ENCODE measurements at regions of chr15 and their contacts with region 1.

Region 1: DNA sequence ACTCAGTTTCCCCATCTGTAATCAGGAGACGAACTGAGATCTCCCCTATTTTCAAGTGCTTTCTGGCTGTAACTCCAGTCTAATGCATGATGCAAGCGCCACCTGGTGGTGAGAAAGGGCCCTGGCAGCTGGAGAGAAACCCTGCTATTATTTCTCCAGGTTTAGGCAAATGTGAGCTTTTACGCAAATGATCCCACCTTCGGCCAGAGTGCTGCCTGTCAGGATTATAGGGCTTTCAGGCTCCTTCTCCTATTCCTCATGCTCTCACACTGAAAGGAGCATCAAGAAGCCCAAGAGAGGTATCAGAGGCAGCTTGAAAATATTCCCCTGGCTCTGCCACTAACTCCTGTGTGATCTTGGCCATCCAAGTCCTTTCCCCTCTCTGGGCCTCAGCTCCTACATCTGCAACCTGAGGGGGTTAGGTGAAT is 93.9 kb upstream of the RASGRF1 start:
- DNase-seq: no peak
- H3K4me3 ChIP-seq: no peak overlapping the region
- H3K27me3 ChIP-seq: 0 out of 2 replicates have a peak, but pooled peaks cover 2% of the 10 kb centered on the region
- CTCF ChIP-seq: peak; percentile 94

Region 2: DNA sequence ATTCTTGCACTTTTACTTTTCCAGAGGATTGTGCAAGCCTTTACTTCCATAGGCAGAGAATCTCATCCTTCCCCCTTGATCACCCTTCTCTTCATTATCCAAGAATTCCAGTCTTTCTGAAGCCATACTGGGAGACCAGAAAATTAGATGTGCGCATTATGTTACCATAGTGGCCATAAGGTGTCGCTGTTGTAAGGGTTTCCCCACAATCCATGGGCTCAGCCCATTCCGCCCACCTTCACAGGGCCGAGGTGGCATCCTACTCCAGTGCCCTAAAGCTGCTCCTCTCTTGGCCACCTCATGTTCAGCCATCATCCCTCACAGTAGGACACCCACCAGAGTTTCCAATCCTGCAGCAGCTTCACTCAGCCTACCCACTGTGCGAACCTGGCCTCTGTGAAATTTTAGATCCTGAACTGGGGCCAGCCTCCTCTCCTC is 274.7 kb before region 1 on chr15:
- CTCF ChIA-PET with region 1: interaction called, 28 read pairs
- POLR2A ChIA-PET with region 1: no interaction called
- DNase-seq: no peak
- H3K4me3 ChIP-seq: no peak overlapping the region
- H3K27me3 ChIP-seq: no peaks in the 10 kb centered on the region
- CTCF ChIP-seq: peak; percentile 69

Region 3: GRCh38 chr15:78979456-78980320 is 204.8 kb before region 1 on chr15:
- CTCF ChIA-PET with region 1: interaction called, 13 read pairs
- POLR2A ChIA-PET with region 1: no interaction called
- DNase-seq: no peak
- H3K4me3 ChIP-seq: no peak overlapping the region
- H3K27me3 ChIP-seq: no peaks in the 10 kb centered on the region
- CTCF ChIP-seq: peak; percentile 73

Region 4: DNA sequence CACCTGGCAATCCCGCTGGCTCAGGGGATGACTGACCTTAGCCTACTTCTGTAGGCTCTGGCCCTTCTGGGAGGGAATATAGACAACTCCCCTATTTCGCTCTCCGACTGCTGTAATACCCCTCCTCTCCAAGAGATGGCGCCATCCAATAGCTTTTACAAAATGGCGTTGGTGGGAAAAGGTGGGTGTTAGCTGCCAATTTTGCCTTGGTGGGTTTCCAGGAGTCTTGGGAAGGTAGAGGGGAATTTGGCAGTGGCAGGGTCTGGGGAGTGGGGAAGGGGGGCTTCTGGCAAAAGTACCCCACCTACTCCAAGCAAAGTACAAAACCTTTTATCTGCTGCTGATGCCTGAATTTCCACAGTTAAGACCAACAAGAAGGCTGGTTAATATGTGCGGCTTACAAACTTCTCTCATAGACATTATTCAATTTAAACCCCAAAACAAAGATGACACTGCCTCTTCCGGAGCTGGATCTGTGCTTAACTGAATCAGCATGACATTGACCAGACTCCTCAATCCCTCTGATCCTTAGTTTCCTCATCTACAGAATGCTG is 156.0 kb before region 1 on chr15:
- CTCF ChIA-PET with region 1: interaction called, 120 read pairs
- POLR2A ChIA-PET with region 1: interaction called, 3 read pairs
- DNase-seq: no peak
- H3K4me3 ChIP-seq: no peak overlapping the region
- H3K27me3 ChIP-seq: no peaks in the 10 kb centered on the region
- CTCF ChIP-seq: peak; percentile 82

Region 5: DNA sequence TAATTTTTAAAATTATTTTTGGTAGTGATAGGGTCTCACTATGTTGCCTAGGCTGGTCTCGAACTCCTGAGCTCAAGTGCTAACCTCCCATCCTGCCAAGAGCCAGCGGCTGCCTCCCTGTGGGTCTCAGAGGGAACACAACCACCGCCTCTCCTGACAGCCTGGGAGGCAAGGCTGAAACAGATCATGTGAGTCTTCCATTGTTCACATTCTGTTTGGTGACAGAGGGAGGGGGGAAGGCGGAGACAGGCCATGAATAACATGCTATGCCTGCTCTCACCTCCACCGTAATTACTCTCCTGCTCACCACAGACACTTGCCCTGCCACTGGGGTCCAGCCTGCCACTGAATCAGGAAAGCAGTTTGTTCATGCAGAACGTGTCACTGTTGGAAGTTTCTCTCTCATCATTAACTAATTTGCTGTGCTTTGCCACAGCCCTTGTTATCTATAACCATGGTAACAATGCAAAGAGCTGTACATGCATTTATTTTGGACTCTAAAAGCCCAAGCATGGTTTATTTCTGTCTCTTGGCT is 15.5 kb before region 1 on chr15:
- CTCF ChIA-PET with region 1: interaction called, 34 read pairs
- POLR2A ChIA-PET with region 1: no interaction called
- DNase-seq: no peak
- H3K4me3 ChIP-seq: no peak overlapping the region
- H3K27me3 ChIP-seq: no peaks in the 10 kb centered on the region
- CTCF ChIP-seq: no peak

Region 6: GRCh38 chr15:79204886-79205675 is 20.6 kb after region 1 on chr15:
- CTCF ChIA-PET with region 1: interaction called, 11 read pairs
- POLR2A ChIA-PET with region 1: no interaction called
- DNase-seq: no peak
- H3K4me3 ChIP-seq: no peak overlapping the region
- H3K27me3 ChIP-seq: no peaks in the 10 kb centered on the region; the same call in none of the 2 replicates
- CTCF ChIP-seq: no peak

Region 7: DNA sequence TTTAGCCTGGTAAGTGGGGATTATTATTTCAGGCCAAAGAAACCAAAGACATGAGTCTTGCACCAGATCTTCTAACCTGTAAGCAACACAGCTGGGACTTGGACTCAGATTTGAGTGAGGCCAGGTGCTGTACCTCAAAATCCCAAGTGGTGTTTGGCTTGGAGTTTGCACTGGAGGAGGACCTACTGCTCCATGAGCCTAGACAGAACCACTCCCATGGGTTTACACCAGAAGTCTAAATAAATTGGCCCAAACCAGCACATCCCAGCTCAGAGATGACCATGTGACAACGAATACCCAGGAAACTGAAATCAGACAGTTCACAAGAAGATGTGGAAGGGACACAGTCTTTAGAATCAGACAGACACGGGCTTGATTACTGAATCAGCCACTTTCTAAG is 295.1 kb after region 1 on chr15:
- CTCF ChIA-PET with region 1: no interaction called
- POLR2A ChIA-PET with region 1: no interaction called
- DNase-seq: no peak
- H3K4me3 ChIP-seq: no peak overlapping the region
- H3K27me3 ChIP-seq: no peaks in the 10 kb centered on the region
- CTCF ChIP-seq: no peak